Posterior cingulate gyrus (tissue), 11 donors: ENCODE measurements at regions of chr9 and their contacts with region 1.

Region 1: DNA sequence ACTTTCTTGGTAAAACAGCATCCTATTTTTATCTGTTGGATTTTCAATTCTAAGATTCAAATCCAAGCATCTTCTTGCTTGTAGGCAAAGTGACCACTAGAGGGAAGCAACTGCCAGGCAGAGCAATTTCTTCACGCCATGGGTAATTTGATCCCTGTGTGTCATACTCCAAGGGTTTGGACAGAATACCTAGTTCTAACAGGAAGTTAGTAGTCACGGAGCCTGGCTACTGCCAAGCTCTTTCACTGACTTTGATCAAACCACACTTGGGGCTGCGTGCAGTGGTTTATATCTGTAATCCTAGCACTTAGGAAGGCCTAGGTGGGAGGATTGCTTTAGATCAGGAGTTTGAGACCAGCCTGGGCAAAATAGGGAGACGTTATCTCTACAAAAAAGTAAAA is 473.6 kb upstream of the TNC start:
- DNase-seq: peak in 5 of 10 donors; percentile 12 to 81 (median 49)

Region 2: GRCh38 chr9:114551883-114552685 is 1039.5 kb before region 1 on chr9:
- intact Hi-C with region 1: no loop called
- DNase-seq: no peak

Region 3: GRCh38 chr9:116149844-116150243 is 558.3 kb after region 1 on chr9:
- intact Hi-C with region 1: loop called (anchors 10 kb)
- DNase-seq: no peak

Region 4: DNA sequence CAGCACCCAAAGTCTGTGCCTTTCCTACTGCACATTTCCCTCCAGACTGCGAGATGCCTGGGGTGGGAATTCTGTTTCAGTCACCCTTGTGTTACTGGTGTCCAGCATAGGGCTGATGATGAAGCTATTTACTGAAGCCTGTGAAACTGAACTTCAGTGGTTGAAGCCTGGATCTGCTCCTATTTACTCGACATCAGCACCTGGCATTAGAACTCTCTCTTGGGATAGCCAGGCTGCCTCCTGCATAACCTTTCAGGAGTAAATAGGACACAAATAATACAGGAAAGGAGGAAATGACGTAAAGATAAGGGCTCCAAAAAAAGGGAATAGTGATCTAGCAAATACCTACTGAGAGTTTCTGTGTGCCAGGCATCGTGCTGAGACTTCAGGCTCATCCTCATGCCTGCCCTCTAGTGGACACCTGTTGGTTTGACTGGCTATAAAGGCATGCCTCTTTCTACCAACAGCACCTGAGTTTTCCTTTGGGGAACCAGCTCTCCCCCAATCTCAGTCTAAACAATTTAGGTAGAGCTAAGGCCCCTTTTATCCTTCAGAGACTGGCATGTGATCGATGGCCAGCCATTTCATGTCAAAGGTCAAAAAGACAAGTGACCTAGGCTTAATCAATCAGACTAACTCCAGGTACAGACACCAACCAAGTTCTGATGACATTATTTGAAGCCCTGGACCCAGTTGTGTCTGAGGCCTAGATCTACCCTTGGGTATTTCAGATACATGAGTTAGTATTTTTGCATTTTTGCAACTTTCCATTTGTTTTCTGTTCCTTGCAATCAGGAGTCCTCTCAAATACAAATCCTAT is 903.4 kb after region 1 on chr9:
- intact Hi-C with region 1: loop called (anchors 5 kb)
- DNase-seq: peak in 2 of 10 donors; percentile 15 to 21

Region 5: DNA sequence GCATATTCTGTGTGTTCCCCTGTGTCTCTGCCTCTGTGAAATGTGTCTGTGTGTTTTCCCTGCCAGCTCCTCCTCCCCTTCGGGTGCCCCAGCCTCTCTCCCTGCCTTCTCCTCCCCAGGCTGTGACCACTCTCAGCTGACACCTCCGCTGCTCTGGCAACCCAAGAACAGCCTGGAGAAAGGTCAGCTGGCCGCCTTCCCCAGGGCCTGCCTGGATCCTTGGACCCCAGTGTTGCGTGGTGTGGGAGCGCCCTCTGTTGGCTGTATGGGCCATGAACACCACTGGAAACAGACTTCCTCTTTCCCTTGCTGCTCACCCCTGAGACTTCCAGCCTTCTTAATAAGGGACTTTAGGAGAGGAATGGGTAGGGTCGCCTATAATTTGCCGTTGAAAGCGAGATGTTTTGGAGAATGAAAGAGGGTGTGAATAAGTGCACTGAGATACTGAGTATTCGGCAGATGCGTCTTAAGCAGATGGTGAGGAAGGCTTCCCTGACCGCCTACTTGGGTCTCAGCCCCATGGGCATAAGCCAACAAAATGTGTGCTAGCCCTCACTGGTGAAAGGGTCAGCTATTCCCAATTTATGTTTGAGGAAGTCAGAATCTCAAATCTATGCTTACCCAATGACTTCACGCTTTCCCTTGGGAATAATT is 980.6 kb after region 1 on chr9:
- intact Hi-C with region 1: loop called (anchors 2 kb)
- DNase-seq: peak; percentile 61 to 95 (median 76)

Region 6: GRCh38 chr9:116646661-116647512 is 1055.3 kb after region 1 on chr9:
- intact Hi-C with region 1: loop called (anchors 2 kb)
- DNase-seq: no peak

Region 7: DNA sequence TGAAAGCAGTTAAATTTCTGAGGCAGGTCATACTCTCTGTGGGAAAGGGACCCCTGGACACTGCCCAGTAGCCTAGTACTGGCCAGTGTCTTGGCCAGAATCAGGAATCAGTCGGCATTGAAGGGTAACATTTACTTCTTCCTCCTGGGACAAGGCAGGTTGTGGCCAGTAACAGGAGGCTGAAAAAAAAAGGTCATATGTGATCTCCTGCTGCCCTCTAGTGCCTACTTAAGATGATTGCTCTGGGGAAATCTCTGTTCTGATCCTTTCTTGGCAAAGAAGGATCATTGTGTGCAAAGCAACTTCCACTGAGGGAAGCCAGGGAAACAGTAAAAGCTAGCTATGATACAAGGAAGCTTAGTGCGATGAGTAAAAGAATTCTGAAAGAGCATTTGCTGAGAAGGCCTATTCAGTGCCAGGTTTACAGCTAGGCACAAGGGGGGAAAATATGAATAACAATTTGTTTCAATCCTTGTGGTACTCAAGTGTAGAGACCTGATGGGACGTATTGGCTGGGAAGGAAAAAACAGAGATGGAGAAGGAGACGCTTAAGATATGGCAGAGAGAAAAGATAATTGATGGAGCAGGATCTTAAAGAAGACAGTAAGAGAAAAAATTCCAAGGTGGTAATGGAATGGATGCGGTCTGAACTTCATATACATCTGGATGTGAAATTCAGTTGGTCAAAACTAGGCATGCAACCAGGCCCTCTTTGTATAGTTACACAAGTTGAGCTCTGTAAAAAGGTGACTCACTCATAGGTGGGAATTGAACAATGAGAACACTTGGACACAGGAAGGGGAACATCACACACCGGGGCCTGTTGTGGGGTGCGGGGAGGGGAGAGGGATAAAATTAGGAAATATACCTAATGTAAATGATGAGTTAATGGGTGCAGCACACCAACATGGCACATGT is 1069.7 kb after region 1 on chr9:
- intact Hi-C with region 1: loop called (anchors 5 kb)
- DNase-seq: peak in 1 of 10 donors; percentile 14